H1 (cell line): ENCODE measurements at regions of chr6 and their contacts with region 1.

Region 1: GRCh38 chr6:31842056-31842455 is 14.5 kb downstream of the HSPA1B start:
- DNase-seq: no peak
- H3K4me3 ChIP-seq: no peak overlapping the region
- H3K27ac ChIP-seq: no peak overlapping the region
- H3K4me1 ChIP-seq: peaks cover 2 to 8% (median 5%) of the 10 kb centered on the region in 4 experiments; a peak in 4 of 7 replicates
- H3K27me3 ChIP-seq: no peaks in the 10 kb centered on the region
- CTCF ChIP-seq: no peak
- EP300 ChIP-seq: no peak
- POLR2A ChIP-seq: no peak
- RAD21 ChIP-seq: no peak

Region 2: DNA sequence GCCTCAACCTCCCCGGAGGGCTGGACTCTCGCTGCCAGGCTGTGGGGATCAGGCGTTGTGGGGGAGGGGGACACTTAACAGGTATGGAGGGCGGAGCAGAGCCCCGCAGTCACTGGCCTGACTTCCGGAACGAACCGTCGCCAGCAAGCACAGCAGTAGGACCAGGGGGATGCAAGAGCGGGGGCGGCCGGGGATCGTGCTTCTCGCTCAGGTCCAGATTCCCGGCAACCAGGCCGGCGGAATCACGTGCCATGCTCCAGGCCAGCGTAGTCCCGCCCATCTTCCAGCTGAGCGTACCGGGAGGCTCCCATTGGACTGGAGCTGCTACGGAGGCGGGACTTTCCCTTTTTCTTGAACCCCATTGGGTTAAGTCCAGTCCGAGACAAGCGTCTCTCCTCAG is 661.6 kb before region 1 on chr6:
- CTCF ChIA-PET with region 1: no interaction called
- POLR2A ChIA-PET with region 1: no interaction called
- DNase-seq: peak in 1 of 2 experiments; percentile 81
- H3K4me3 ChIP-seq: no peak overlapping the region
- H3K27ac ChIP-seq: no peak overlapping the region
- H3K4me1 ChIP-seq: peaks cover 0 to 9% (median 6%) of the 10 kb centered on the region in 4 experiments; a peak in 4 of 7 replicates
- H3K27me3 ChIP-seq: no peaks in the 10 kb centered on the region
- CTCF ChIP-seq: no peak
- EP300 ChIP-seq: no peak
- POLR2A ChIP-seq: no peak
- RAD21 ChIP-seq: no peak

Region 3: DNA sequence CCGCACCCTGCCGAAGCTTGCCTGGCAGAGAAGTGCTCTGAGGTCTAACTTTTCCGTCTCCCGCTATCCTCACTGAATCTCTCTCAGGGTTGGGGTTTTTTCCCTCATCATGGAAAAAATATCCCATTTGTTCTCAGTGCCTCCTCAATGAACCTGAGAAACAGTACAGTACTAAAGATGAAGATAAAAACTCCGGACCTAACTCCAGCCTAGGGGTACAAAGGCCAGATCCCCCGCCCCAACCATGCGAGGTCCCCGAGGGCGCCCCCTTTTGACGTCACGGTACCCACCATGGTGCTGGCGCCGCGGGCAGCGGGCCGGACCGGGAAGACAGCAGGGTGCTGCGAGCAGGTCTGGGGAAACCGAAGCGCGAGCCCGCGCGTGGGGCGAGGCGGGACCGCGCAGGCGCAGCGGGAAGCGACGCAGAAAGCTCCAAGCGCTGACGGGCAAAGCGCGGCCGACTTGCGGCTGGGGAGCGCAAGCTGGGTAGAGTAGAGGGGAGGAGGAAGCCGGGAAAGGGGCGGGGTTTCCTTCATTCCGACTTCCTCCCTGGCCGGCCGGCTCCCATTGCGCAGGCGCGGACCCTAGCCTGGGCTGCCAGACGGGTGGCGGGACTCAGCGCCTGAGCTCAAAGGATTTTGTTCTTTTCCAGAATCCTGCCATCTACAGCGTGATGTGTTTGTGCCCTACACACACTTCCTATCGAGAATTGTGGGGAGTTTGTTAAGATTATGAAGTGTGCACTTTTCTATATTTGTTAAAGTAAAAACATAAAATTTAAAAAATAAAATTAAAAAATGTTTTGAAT is 35.4 kb before region 1 on chr6 and contains the start of gene LSM2:
- CTCF ChIA-PET with region 1: interaction called, 3 read pairs
- POLR2A ChIA-PET with region 1: interaction called, 45 read pairs
- DNase-seq: peak in 1 of 2 experiments; percentile 99
- H3K4me3 ChIP-seq: peak within 1 kb of the TSS; percentile 76 to 96 (median 86)
- H3K27ac ChIP-seq: peak within 1 kb of the TSS; percentile 91
- H3K4me1 ChIP-seq: peaks cover 0 to 2% (median 0%) of the 10 kb centered on the region in 4 experiments; a peak in 1 of 7 replicates
- H3K27me3 ChIP-seq: no peaks in the 10 kb centered on the region
- CTCF ChIP-seq: no peak
- EP300 ChIP-seq: no peak
- POLR2A ChIP-seq: peak; percentile 58 to 69
- RAD21 ChIP-seq: 0 out of 4 replicates have a peak, but pooled peaks have one; percentile 1 to 8
- total RNA-seq, gene LSM2: 127 and 132 TPM in 2 replicates

Region 4: GRCh38 chr6:31815025-31815838 is 26.8 kb before region 1 on chr6 and contains the starts of genes HSPA1A and HSPA1L:
- CTCF ChIA-PET with region 1: interaction called, 3 read pairs
- POLR2A ChIA-PET with region 1: interaction called, 136 read pairs
- DNase-seq: peak; percentile 91 to 93
- H3K4me3 ChIP-seq: peak within 1 kb of the TSS; percentile 54 to 77 (median 65)
- H3K27ac ChIP-seq: peak within 1 kb of the TSS; percentile 37; the same call in 1 of the 2 replicates
- H3K4me1 ChIP-seq: peaks cover 0 to 5% (median 3%) of the 10 kb centered on the region in 4 experiments; a peak in 5 of 7 replicates
- H3K27me3 ChIP-seq: no peaks in the 10 kb centered on the region
- CTCF ChIP-seq: no peak
- EP300 ChIP-seq: no peak
- POLR2A ChIP-seq: peak; percentile 97
- RAD21 ChIP-seq: no peak
- total RNA-seq, gene HSPA1A: 54.0 and 59.9 TPM in 2 replicates
- total RNA-seq, gene HSPA1L: 1.6 and 1.9 TPM in 2 replicates

Region 5: GRCh38 chr6:31822036-31822821 is 19.8 kb before region 1 on chr6:
- CTCF ChIA-PET with region 1: interaction called, 5 read pairs
- POLR2A ChIA-PET with region 1: interaction called, 136 read pairs
- DNase-seq: peak in 1 of 2 experiments; percentile 74
- H3K4me3 ChIP-seq: peak overlapping the region; percentile 66 to 87 (median 78)
- H3K27ac ChIP-seq: peak overlapping the region; percentile 52; the same call in 1 of the 2 replicates
- H3K4me1 ChIP-seq: peaks cover 5 to 16% (median 9%) of the 10 kb centered on the region in 4 experiments; a peak in 6 of 7 replicates
- H3K27me3 ChIP-seq: no peaks in the 10 kb centered on the region; a peak in 1 of 7 replicates
- CTCF ChIP-seq: no peak
- EP300 ChIP-seq: no peak
- POLR2A ChIP-seq: no peak
- RAD21 ChIP-seq: no peak

Region 6: DNA sequence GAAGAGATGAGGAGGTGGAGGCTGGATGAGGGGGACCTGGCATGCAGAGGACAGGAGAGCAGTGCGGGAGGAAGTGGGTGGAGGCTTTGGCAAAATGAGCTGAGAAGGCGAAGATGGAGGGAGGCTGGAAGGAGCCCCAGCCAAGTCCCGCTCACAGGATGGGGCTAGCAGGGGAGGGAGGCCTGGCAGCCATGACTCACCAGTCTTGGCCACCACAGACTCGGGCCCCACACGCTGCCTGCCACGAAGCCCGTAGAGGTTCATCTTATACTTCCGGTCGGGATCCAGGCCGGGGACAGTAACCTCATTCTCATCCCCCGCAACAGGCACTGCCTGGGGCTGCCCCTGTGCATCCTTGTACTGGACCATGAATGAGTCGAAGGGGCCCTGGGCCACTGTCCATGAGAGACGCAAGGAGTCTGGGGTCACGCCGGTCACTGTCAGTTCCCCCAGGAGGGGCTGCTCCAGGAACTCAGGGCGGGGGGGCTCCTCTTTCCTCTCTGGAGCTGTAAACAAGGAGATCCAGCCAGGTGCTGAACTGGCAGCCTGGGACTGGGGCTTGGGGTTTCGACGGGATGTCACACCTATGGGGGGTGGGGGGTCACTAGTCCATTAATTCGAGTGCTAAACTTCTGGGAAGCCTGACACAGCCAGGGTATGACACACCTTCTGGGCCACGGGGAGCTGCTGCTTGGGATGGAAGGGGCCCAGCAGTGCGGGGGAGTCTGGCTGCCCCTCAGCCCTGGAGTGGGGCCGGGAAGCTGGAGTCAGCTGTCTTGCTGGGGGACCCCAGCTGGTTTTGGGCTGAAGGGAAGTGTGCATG is 239.3 kb after region 1 on chr6:
- CTCF ChIA-PET with region 1: no interaction called
- POLR2A ChIA-PET with region 1: no interaction called
- DNase-seq: no peak
- H3K4me3 ChIP-seq: no peak overlapping the region
- H3K27ac ChIP-seq: no peak overlapping the region
- H3K4me1 ChIP-seq: peaks cover 0 to 2% (median under 1%) of the 10 kb centered on the region in 4 experiments; a peak in 4 of 7 replicates
- H3K27me3 ChIP-seq: peaks cover 0 to 3% (median 3%) of the 10 kb centered on the region in 4 experiments; a peak in 4 of 7 replicates
- CTCF ChIP-seq: no peak
- EP300 ChIP-seq: no peak
- POLR2A ChIP-seq: no peak
- RAD21 ChIP-seq: no peak